ENCODE measurements at regions of chr1 and their contacts with region 1.

Region 1: DNA sequence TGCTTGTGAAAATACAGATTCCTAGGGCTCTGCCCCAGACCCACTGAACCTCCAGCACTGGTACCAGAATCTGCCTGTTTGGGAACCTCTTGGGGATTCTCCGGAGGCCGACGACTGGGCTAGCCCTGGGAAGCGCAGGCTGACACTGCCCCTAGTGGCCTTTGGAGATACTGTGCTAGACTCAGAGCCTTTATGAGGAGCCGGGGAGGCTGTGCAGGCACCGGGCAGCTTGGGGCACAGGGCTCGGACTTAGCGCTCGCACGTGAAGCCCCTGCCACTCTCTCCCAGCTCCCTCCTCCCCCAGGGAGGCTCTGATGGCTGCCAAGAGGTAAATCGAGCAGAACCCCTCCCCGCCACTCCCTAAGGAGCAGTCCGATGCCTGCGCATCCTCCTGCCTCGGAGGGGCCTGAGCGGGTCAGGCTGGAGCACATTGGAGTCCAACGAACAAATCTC is 144.6 kb upstream of the TNR start:
- DNase-seq: no peak
- H3K4me3 ChIP-seq: no peak overlapping the region
- CTCF ChIP-seq: peak; percentile 88

Region 2: DNA sequence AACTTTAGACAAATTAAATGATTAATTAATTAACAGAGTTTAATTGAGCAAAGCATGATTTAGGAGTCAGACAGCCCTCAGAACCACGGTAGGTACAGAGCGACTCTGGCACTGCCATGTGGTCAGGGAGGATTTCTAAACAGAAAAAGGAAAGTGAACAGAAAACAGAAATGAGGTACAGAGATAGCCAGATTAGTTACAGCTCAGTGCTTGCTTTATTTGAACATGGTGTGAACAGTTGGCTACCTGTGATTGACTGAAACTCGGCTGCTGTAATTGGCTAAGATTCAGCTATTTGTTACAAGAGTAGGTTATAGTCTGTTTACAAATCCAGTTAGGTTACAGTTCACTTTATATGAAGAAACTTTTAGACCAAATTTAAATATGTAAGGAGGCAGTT is 18.4 kb after region 1 on chr1:
- CTCF ChIA-PET with region 1: interaction called, 10 read pairs
- POLR2A ChIA-PET with region 1: no interaction called
- DNase-seq: no peak
- H3K4me3 ChIP-seq: no peak overlapping the region
- CTCF ChIP-seq: no peak

Measured in AG04449 (cell line).